Common myeloid progenitor, CD34-positive (primary cell): ENCODE measurements at regions of chr1 and their contacts with region 1.

Region 1: DNA sequence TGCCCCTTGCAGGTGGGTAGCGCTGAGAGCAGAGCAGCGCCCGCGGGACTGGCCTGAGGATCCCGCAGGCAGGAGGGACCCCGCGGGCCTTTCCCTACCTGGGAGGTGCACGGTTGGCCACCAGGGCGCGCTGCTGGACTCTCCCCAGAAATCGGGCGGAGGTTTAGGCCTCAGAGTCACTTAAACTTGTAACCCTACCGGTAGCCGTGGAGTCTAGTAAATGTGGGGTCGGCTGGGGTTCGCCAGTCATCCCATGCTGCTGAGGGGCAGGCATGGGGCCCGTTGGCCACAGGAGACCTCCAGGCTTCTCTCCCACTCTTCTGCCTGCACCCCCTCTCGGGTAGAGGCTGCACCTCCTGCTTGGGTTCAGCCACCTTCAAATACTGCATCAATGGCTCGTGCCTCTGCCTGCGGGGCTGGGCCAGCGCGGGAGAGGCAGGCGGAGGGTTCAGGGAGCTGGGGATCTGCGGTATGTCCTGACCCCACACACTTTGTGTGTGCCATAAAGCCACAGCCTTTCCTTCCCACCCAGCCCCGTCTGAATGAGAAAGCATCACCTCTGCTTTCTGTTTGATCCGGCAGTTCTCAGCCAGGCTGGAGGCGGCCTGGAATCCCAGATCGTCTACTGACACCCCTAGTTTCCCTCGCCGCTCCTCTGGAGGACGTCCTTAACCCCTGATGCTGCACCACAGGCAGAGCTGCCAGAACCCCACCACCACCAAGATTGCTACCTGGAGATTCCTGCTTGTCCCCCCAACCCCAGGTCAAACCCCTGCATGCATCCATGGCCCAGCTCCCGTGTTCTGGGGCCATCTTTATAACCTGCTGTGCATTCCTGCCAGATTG is 12.3 kb upstream of the GSTM4 start:
- DNase-seq: peak; percentile 81 to 88 (median 87)
- H3K4me3 ChIP-seq: peak overlapping the region in 2 of 7 experiments; percentile 26 to 43
- H3K27ac ChIP-seq: no peak overlapping the region
- H3K4me1 ChIP-seq: peaks cover 0 to 43% (median 16%) of the 10 kb centered on the region in 4 experiments
- H3K27me3 ChIP-seq: no peaks in the 10 kb centered on the region

Region 2: GRCh38 chr1:109570417-109570827 is 73.2 kb before region 1 on chr1:
- CTCF ChIA-PET with region 1: interaction called, 20 read pairs
- POLR2A ChIA-PET with region 1: no interaction called
- DNase-seq: no peak
- H3K4me3 ChIP-seq: no peak overlapping the region
- H3K27ac ChIP-seq: no peak overlapping the region
- H3K4me1 ChIP-seq: peaks cover 7 to 29% (median 20%) of the 10 kb centered on the region in 4 experiments
- H3K27me3 ChIP-seq: no peaks in the 10 kb centered on the region

Region 3: DNA sequence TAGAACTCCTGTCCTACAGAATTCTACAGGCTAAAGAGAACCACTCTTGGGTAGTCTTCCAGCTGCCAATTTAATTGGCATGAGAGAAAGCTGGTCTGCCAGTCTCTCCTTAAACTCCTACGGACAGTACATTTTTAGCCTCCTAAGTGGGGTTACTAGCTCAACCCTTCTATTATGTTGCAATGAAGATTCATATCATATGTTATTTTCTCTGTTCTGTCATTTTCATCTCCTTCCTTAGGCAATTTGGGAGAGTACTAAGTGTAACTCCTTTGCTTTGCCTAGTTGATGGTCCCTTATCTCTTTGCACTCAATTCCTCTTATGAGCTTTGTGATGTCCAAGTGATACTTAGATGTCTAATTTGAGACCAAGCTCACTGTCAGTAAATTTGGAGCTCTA is 38.2 kb before region 1 on chr1:
- CTCF ChIA-PET with region 1: interaction called, 78 read pairs
- POLR2A ChIA-PET with region 1: no interaction called
- DNase-seq: no peak
- H3K4me3 ChIP-seq: no peak overlapping the region
- H3K27ac ChIP-seq: no peak overlapping the region
- H3K4me1 ChIP-seq: peaks cover 0 to 7% (median 1%) of the 10 kb centered on the region in 4 experiments
- H3K27me3 ChIP-seq: no peaks in the 10 kb centered on the region

Region 4: GRCh38 chr1:109620841-109621286 is 22.7 kb before region 1 on chr1:
- CTCF ChIA-PET with region 1: interaction called, 69 read pairs
- POLR2A ChIA-PET with region 1: no interaction called
- DNase-seq: peak; percentile 97 to 99 (median 99)
- H3K4me3 ChIP-seq: peak overlapping the region; percentile 76 to 97 (median 93)
- H3K27ac ChIP-seq: peak overlapping the region; percentile 97 to 99
- H3K4me1 ChIP-seq: peaks cover 48 to 85% (median 75%) of the 10 kb centered on the region in 4 experiments
- H3K27me3 ChIP-seq: no peaks in the 10 kb centered on the region

Region 5: DNA sequence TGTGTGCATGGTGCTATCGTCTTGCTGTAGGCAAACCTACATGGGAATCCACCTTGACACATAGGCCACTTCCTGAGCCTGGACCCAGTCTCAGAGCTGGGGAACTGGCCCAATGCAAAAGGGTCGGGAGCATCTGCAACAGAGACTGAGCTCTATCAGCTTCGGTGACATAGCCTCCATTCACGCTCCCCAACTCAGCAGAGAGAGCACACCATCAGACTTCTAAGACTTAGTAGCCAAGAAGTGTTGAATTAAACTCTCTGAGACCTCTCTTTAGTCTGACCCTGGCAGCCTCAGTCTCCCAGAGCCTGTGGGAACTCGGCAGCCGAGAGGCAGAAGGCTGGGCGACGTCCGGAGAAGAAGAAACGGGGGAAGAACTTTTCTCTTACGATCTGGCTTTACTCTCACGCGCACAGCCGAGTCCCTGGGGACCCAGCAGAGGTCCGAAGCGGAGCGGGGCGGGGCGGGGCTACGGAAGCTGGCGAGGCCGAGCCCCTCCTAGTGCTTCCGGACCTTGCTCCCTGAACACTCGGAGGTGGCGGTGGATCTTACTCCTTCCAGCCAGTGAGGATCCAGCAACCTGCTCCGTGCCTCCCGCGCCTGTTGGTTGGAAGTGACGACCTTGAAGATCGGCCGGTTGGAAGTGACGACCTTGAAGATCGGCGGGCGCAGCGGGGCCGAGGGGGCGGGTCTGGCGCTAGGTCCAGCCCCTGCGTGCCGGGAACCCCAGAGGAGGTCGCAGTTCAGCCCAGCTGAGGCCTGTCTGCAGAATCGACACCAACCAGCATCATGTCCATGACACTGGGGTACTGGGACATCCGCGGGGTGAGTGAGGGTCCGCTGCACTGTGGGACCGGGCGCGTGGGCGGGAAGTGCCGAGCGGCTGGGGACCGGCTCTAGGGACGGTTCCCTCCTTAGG is 12.3 kb after region 1 on chr1 and contains the start of gene GSTM4:
- CTCF ChIA-PET with region 1: interaction called, 233 read pairs
- POLR2A ChIA-PET with region 1: no interaction called
- DNase-seq: peak; percentile 53 to 68 (median 57)
- H3K4me3 ChIP-seq: peak within 1 kb of the TSS; percentile 69 to 93 (median 84)
- H3K27ac ChIP-seq: peak within 1 kb of the TSS in 1 of 2 experiments; percentile 47
- H3K4me1 ChIP-seq: peaks cover 3 to 36% (median 26%) of the 10 kb centered on the region in 4 experiments
- H3K27me3 ChIP-seq: peaks cover 0 to 2% (median 0%) of the 10 kb centered on the region in 5 experiments

Region 6: DNA sequence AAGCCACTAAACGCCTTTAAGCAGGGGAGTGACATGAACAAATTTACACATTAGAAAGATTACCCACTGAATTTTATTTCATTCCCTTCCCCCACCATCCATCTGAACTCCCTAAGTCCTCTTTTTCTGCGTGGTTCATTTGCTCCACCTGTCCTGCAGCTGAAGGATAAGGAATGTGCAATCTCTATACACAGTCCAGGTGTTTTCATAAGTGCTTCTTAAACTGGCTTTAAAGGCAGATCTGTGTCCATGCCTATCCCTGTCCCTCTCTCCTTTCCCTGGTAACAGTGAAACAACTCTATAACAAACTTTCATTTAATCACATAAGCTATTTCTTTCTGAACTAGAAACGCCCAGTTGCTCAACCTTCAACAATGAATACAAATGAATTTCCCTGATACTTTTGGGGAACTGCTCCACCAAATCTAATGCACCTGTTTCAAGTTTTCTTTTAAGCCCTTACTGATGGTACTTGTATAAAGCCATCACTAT is 88.8 kb after region 1 on chr1:
- CTCF ChIA-PET with region 1: no interaction called
- POLR2A ChIA-PET with region 1: no interaction called
- DNase-seq: no peak
- H3K4me3 ChIP-seq: no peak overlapping the region
- H3K27ac ChIP-seq: no peak overlapping the region
- H3K4me1 ChIP-seq: no peaks in the 10 kb centered on the region
- H3K27me3 ChIP-seq: peaks cover 0 to 2% (median 0%) of the 10 kb centered on the region in 5 experiments

Region 7: DNA sequence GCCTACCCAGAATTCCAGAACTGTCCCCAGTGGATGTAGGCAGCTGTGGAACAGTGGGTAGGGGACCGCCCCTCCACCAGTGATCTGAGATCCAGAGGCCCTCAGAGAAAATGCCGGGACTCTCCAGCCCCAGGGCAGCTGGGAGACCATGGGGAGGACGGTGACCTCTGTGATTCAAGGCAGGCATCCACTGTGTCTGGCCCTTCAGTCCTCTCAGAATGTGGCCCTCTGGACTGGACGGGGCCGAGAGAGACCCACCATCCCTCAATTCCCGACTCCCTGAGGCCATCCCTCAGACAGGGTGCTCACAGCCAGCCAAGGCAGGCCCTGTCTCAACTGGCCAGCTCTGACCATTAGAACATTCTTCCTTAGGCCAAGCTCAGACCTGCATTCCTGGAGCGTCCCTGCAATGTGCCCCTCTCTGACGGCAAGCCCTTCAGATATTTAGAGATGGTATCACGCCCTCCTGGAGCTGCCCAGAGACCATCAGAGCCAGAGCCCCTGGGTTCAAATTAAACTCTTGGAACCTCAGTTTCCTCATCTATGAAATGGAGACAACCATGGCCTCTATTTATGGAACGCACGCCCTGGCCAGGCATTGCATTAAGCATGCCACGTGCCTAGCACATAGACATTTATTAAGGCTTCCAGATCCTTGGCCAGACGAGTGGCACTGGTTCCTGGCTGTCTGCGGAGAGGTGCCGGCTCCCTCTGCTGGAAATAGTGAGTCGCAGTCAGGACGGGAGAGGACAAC is 129.7 kb after region 1 on chr1:
- CTCF ChIA-PET with region 1: interaction called, 320 read pairs
- POLR2A ChIA-PET with region 1: interaction called, 4 read pairs
- DNase-seq: peak; percentile 81 to 91 (median 90)
- H3K4me3 ChIP-seq: no peak overlapping the region
- H3K27ac ChIP-seq: no peak overlapping the region
- H3K4me1 ChIP-seq: peaks cover 0 to 9% (median 5%) of the 10 kb centered on the region in 4 experiments
- H3K27me3 ChIP-seq: no peaks in the 10 kb centered on the region

Region 8: DNA sequence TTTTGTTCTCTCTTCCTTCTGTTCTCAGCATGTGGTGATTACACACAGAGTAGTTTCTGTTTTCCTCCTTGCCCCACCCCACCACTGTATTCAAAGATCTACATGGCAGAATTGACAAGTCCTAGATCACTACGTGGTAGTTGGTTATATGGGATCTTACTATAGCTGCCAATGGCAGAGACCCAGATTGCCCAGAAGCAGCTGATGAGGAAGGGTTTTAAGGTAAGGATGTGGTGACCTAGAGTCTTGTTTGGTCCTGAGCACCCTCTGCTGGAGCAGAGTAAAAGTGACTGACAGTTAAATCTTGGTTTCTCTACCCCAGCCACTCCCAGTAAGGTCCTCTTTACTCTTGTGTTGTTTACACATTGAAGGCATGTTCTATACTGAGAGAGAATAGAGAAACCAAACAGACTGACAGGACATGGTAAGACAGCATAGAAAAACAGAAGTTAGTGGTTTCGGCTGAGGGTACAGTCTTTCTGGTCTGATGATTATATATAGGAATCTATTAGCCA is 368.0 kb after region 1 on chr1:
- CTCF ChIA-PET with region 1: interaction called, 13 read pairs
- POLR2A ChIA-PET with region 1: no interaction called
- DNase-seq: peak; percentile 65 to 82 (median 78)
- H3K4me3 ChIP-seq: no peak overlapping the region
- H3K27ac ChIP-seq: no peak overlapping the region
- H3K4me1 ChIP-seq: no peaks in the 10 kb centered on the region
- H3K27me3 ChIP-seq: no peaks in the 10 kb centered on the region